Tibial artery (tissue), 4 donors: ENCODE measurements at regions of chr6 and their contacts with region 1.

Region 1: GRCh38 chr6:79570129-79571029 is 33.1 kb upstream of the LCA5 start:
- DNase-seq: no peak
- H3K4me3 ChIP-seq: peak overlapping the region in 1 of 2 donors; percentile 22
- H3K27ac ChIP-seq: no peak overlapping the region
- H3K4me1 ChIP-seq: peaks cover 0 to 8% (median 3%) of the 10 kb centered on the region in 4 donors
- H3K27me3 ChIP-seq: no peaks in the 10 kb centered on the region
- CTCF ChIP-seq: peak; percentile 44 to 51

Region 2: DNA sequence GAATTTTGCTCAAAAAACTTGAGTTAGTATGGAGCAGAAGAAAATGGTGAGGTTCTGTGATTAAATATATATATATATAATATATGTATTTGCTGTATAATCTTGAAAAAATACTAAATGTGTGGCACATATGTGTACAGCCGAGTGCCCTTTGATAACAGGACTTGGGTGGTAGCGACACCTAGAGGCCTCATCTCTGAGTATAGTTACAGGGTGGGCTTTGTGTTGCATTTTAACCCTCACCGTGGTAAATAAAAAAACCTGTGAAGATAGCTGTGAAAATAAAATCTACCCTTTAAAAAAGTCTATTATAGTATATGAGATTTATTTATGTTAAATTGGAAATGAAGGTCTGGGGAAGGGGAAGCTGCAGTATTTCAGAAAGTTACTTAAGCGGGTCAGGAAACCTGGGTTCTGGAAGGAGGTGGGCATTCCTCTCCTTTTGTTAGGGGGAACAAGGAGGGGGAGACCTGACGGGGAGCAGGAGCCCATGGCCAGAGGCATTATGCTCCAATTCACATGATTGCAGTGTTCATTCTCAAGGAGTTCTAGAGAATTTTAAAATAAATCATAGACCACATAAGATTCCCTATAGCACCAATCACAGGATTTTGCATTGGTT is 143.4 kb after region 1 on chr6:
- intact Hi-C with region 1: loop called (anchors 10 kb)
- DNase-seq: no peak
- H3K4me3 ChIP-seq: no peak overlapping the region
- H3K27ac ChIP-seq: no peak overlapping the region
- H3K4me1 ChIP-seq: peaks cover 0 to 4% (median 0%) of the 10 kb centered on the region in 4 donors
- H3K27me3 ChIP-seq: no peaks in the 10 kb centered on the region
- CTCF ChIP-seq: peak in 1 of 2 experiments; percentile 52

Region 3: GRCh38 chr6:79813854-79814709 is 243.7 kb after region 1 on chr6:
- intact Hi-C with region 1: loop called (anchors 10 kb)
- DNase-seq: peak; percentile 67 to 85
- H3K4me3 ChIP-seq: no peak overlapping the region
- H3K27ac ChIP-seq: no peak overlapping the region
- H3K4me1 ChIP-seq: no peaks in the 10 kb centered on the region
- H3K27me3 ChIP-seq: no peaks in the 10 kb centered on the region
- CTCF ChIP-seq: peak; percentile 59 to 74